SK-N-SH (cell line): ENCODE measurements at regions of chr3 and their contacts with region 1.

Region 1: GRCh38 chr3:42229942-42230688 is 35.9 kb downstream of the CCK start:
- DNase-seq: peak; percentile 67
- H3K4me3 ChIP-seq: no peak overlapping the region; a peak in 1 of 4 replicates
- H3K27ac ChIP-seq: no peak overlapping the region
- H3K4me1 ChIP-seq: no peaks in the 10 kb centered on the region; a peak in 1 of 4 replicates
- H3K27me3 ChIP-seq: no peaks in the 10 kb centered on the region
- CTCF ChIP-seq: peak; percentile 72
- EP300 ChIP-seq: no peak
- RAD21 ChIP-seq: peak; percentile 77

Region 2: DNA sequence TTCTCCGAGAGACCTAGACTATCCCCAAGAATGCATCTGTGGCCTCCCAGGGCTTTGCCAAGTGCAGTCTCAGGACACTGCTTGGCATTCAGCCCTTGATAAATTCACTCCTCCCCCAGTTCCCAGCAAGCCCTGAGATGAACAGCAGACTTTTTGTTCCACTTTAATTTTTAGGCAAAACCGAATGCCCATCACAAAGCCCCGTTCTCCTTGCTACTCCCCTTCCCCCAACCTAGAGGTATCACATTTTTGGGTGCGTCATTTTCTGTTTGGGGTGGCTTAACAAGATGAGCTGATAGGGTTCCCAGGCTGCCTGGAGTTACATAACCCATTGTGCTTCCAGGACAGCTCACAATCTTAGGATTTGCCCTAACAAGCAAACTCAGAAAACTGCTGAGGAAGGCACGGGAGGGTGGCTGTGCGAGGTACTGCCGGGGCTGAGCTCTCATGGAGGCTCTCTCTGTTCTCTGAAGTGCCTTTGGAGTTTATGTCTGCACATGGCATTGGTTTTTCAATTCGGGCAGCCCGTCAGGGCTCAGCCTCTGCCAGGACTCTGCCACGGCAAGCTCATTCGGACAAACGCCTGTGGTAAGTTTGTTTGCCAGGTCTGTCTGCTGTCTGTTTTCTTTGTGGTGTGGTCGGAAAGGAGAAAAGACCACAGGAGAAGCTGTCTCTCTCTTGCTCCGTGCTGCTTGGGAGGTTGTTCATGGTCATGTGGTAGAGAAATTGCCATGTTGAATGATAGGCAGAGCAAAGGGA is 139.0 kb before region 1 on chr3 and contains the start of gene TRAK1:
- CTCF ChIA-PET with region 1: no interaction called
- POLR2A ChIA-PET with region 1: no interaction called
- DNase-seq: no peak
- H3K4me3 ChIP-seq: no peak within 1 kb of the TSS; a peak in 1 of 4 replicates
- H3K27ac ChIP-seq: no peak within 1 kb of the TSS
- H3K4me1 ChIP-seq: no peaks in the 10 kb centered on the region; a peak in 1 of 4 replicates
- H3K27me3 ChIP-seq: no peaks in the 10 kb centered on the region
- CTCF ChIP-seq: no peak
- EP300 ChIP-seq: no peak
- RAD21 ChIP-seq: no peak
- polyA plus RNA-seq, gene TRAK1: 11.5 and 12.5 TPM in 2 replicates

Region 3: GRCh38 chr3:42118762-42119361 is 111.3 kb before region 1 on chr3:
- CTCF ChIA-PET with region 1: interaction called, 26 read pairs
- POLR2A ChIA-PET with region 1: no interaction called
- DNase-seq: peak; percentile 80
- H3K4me3 ChIP-seq: no peak overlapping the region
- H3K27ac ChIP-seq: no peak overlapping the region
- H3K4me1 ChIP-seq: peaks cover 2 to 8% of the 10 kb centered on the region in 2 experiments; a peak in 3 of 4 replicates
- H3K27me3 ChIP-seq: no peaks in the 10 kb centered on the region
- CTCF ChIP-seq: peak; percentile 47
- EP300 ChIP-seq: no peak
- RAD21 ChIP-seq: peak; percentile 87

Region 4: GRCh38 chr3:42434777-42435380 is 204.8 kb after region 1 on chr3:
- CTCF ChIA-PET with region 1: interaction called, 10 read pairs
- POLR2A ChIA-PET with region 1: no interaction called
- DNase-seq: no peak
- H3K4me3 ChIP-seq: no peak overlapping the region
- H3K27ac ChIP-seq: no peak overlapping the region
- H3K4me1 ChIP-seq: peaks cover 0 to 5% of the 10 kb centered on the region in 2 experiments; a peak in 1 of 4 replicates
- H3K27me3 ChIP-seq: no peaks in the 10 kb centered on the region
- CTCF ChIP-seq: no peak
- EP300 ChIP-seq: no peak
- RAD21 ChIP-seq: no peak

Region 5: GRCh38 chr3:42443819-42444436 is 213.8 kb after region 1 on chr3:
- CTCF ChIA-PET with region 1: interaction called, 27 read pairs
- POLR2A ChIA-PET with region 1: no interaction called
- DNase-seq: peak; percentile 85
- H3K4me3 ChIP-seq: peak overlapping the region in 1 of 2 experiments; percentile 42; a peak in 1 of 4 replicates
- H3K27ac ChIP-seq: no peak overlapping the region
- H3K4me1 ChIP-seq: peaks cover 0 to 5% of the 10 kb centered on the region in 2 experiments; a peak in 1 of 4 replicates
- H3K27me3 ChIP-seq: peaks cover 5% of the 10 kb centered on the region; the same call in 1 of the 2 replicates
- CTCF ChIP-seq: peak; percentile 96
- EP300 ChIP-seq: no peak
- RAD21 ChIP-seq: peak; percentile 97